ENCODE measurements at regions of chr2 and their contacts with region 1.

Region 1: GRCh38 chr2:229273723-229274338 is 2.7 kb upstream of the PID1 start:
- DNase-seq: peak; percentile 23
- H3K4me3 ChIP-seq: no peak overlapping the region
- H3K27ac ChIP-seq: no peak overlapping the region
- H3K27me3 ChIP-seq: no peaks in the 10 kb centered on the region
- CTCF ChIP-seq: peak; percentile 86

Region 2: DNA sequence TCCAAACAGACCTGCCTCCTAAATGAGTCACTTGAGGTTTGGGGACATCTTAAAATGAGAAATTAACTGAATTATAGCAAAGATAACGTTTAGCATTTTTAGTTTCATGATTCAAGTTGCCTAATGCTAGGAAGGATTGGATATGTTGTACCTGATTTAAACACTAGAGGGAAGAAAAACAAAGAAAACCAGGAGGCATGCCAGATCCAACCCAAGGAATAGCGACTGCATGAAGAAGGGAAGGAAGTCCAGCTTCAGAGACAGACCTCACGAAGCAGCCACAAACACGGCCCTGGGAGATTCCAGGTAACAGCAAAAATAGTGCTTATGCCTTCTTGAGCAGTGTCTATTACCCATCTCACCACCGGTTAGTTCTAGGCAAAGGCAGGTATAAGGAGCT is 592.4 kb before region 1 on chr2:
- CTCF ChIA-PET with region 1: interaction called, 27 read pairs
- POLR2A ChIA-PET with region 1: no interaction called
- DNase-seq: no peak
- H3K4me3 ChIP-seq: no peak overlapping the region
- H3K27ac ChIP-seq: no peak overlapping the region
- H3K27me3 ChIP-seq: no peaks in the 10 kb centered on the region
- CTCF ChIP-seq: peak; percentile 59

Region 3: DNA sequence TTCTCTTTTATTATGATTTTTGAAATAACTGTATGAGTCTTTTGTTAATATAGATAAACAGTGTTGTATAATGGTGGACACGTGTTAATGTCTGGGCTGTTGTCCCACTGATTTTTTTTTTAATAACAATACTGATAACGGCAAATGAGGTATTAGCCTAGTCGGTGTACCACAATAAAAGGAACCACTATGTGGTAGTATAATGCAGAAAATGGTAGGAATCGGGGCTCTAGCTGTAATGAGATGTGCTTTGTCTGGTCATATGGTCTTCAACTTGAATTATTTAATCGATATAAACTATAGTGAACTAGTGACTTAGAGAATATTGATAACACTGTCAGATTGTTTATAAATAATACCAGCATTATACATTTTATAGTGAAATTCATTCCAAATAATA is 574.4 kb before region 1 on chr2:
- CTCF ChIA-PET with region 1: interaction called, 16 read pairs
- POLR2A ChIA-PET with region 1: no interaction called
- DNase-seq: no peak
- H3K4me3 ChIP-seq: no peak overlapping the region
- H3K27ac ChIP-seq: no peak overlapping the region
- H3K27me3 ChIP-seq: no peaks in the 10 kb centered on the region
- CTCF ChIP-seq: 0 out of 2 replicates have a peak, but pooled peaks have one; percentile 14

Region 4: GRCh38 chr2:229239021-229239420 is 34.8 kb before region 1 on chr2:
- CTCF ChIA-PET with region 1: interaction called, 11 read pairs
- POLR2A ChIA-PET with region 1: no interaction called
- DNase-seq: no peak
- H3K4me3 ChIP-seq: no peak overlapping the region
- H3K27ac ChIP-seq: no peak overlapping the region
- H3K27me3 ChIP-seq: no peaks in the 10 kb centered on the region
- CTCF ChIP-seq: no peak

Region 5: DNA sequence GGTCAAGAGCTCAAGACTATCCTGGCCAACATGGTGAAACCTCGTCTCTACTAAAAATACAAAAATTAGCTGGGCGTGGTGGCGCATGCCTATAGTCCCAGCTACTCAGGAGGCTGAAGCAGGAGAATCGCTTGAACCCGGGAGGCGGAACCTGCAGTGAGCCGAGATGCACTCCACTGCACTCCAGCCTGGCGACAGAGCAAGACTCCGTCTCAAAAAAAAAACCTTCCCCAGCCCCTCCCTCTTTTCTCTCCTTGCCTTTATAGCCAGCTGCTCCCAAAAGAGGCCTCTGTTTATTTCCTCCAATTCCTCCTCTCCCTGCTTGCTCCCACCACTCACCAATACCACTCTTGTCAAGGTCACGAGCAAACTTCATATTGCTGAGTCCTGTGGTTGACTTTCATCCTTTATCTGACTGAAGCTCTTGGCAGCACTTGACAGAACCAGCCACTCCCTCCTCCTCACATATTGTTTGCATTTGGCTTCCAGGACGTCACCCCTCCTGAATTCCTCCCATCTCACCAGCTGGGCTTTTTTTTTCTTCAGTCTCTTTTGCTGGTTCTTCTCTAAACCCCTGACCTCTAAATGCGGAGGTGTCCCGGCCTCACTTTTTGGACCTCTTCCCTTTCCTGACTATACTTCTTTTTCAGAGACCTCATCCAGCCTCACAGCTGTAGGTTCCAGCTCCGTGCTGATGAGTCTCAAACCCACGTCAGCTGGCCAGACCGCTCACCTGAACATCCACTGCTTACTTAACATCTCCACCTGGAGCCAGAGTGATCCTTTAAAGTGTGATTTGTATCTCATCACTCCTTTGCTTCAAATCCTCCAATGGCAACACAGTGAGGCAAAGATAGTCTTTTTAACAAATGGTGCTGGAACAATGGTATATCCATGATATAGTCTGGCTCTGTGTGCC is 1354.2 kb after region 1 on chr2:
- CTCF ChIA-PET with region 1: no interaction called
- POLR2A ChIA-PET with region 1: no interaction called
- DNase-seq: peak; percentile 73
- H3K4me3 ChIP-seq: no peak overlapping the region
- H3K27ac ChIP-seq: no peak overlapping the region
- H3K27me3 ChIP-seq: no peaks in the 10 kb centered on the region
- CTCF ChIP-seq: no peak

Measured in AG04450 (cell line).